ENCODE measurements at regions of chr12 and their contacts with region 1.

Region 1: GRCh38 chr12:40152783-40153383 is 47.0 kb upstream of the SLC2A13 start:
- DNase-seq: peak; percentile 78
- ATAC-seq: peak; percentile 78
- H3K4me3 ChIP-seq: no peak overlapping the region
- H3K4me3 Mint-ChIP-seq: no peak overlapping the region
- H3K27ac ChIP-seq: no peak overlapping the region
- H3K27ac Mint-ChIP-seq: no peak overlapping the region
- H3K4me1 ChIP-seq: peaks cover 23 to 26% of the 10 kb centered on the region in 2 donors
- H3K4me1 Mint-ChIP-seq: peaks cover 42% of the 10 kb centered on the region
- H3K27me3 ChIP-seq: no peaks in the 10 kb centered on the region
- H3K27me3 Mint-ChIP-seq: no peaks in the 10 kb centered on the region
- CTCF ChIP-seq: peak; percentile 96

Region 2: GRCh38 chr12:40107098-40107802 is 45.6 kb before region 1 on chr12:
- CTCF ChIA-PET with region 1: interaction called, 3 read pairs
- POLR2A ChIA-PET with region 1: no interaction called
- intact Hi-C with region 1: loop called (anchors 5 kb)
- DNase-seq: peak; percentile 90
- ATAC-seq: peak; percentile 42
- H3K4me3 ChIP-seq: peak overlapping the region in 4 of 5 experiments; percentile 39 to 83 (median 58)
- H3K4me3 Mint-ChIP-seq: peak overlapping the region; percentile 81
- H3K27ac ChIP-seq: peak overlapping the region in 1 of 2 donors; percentile 17
- H3K27ac Mint-ChIP-seq: peak overlapping the region; percentile 7
- H3K4me1 ChIP-seq: peaks cover 10 to 30% of the 10 kb centered on the region in 2 donors
- H3K4me1 Mint-ChIP-seq: peaks cover 29% of the 10 kb centered on the region
- H3K27me3 ChIP-seq: no peaks in the 10 kb centered on the region
- H3K27me3 Mint-ChIP-seq: no peaks in the 10 kb centered on the region
- CTCF ChIP-seq: peak; percentile 94

Region 3: GRCh38 chr12:40192704-40193255 is 39.9 kb after region 1 on chr12:
- CTCF ChIA-PET with region 1: interaction called, 11 read pairs
- POLR2A ChIA-PET with region 1: interaction called, 3 read pairs
- intact Hi-C with region 1: loop called (anchors 2 kb)
- DNase-seq: peak; percentile 81
- ATAC-seq: peak; percentile 92
- H3K4me3 ChIP-seq: peak overlapping the region in 3 of 5 experiments; percentile 0 to 53 (median 22)
- H3K4me3 Mint-ChIP-seq: peak overlapping the region; percentile 78
- H3K27ac ChIP-seq: peak overlapping the region; percentile 71 to 88
- H3K27ac Mint-ChIP-seq: peak overlapping the region; percentile 93
- H3K4me1 ChIP-seq: peaks cover 31 to 32% of the 10 kb centered on the region in 2 donors
- H3K4me1 Mint-ChIP-seq: peaks cover 43% of the 10 kb centered on the region
- H3K27me3 ChIP-seq: no peaks in the 10 kb centered on the region
- H3K27me3 Mint-ChIP-seq: no peaks in the 10 kb centered on the region
- CTCF ChIP-seq: no peak

Region 4: GRCh38 chr12:40208707-40209446 is 56.0 kb after region 1 on chr12:
- CTCF ChIA-PET with region 1: interaction called, 15 read pairs
- POLR2A ChIA-PET with region 1: no interaction called
- intact Hi-C with region 1: no loop called
- DNase-seq: peak; percentile 72
- ATAC-seq: peak; percentile 88
- H3K4me3 ChIP-seq: peak overlapping the region in 3 of 5 experiments; percentile 5 to 48 (median 36)
- H3K4me3 Mint-ChIP-seq: peak overlapping the region; percentile 65
- H3K27ac ChIP-seq: peak overlapping the region; percentile 64 to 84
- H3K27ac Mint-ChIP-seq: peak overlapping the region; percentile 88
- H3K4me1 ChIP-seq: peaks cover 27 to 29% of the 10 kb centered on the region in 2 donors
- H3K4me1 Mint-ChIP-seq: peaks cover 26% of the 10 kb centered on the region
- H3K27me3 ChIP-seq: no peaks in the 10 kb centered on the region
- H3K27me3 Mint-ChIP-seq: no peaks in the 10 kb centered on the region
- CTCF ChIP-seq: no peak

Region 5: GRCh38 chr12:40261937-40262336 is 109.1 kb after region 1 on chr12:
- CTCF ChIA-PET with region 1: interaction called, 8 read pairs
- POLR2A ChIA-PET with region 1: no interaction called
- intact Hi-C with region 1: loop called (anchors 1 kb)
- DNase-seq: peak; percentile 56
- ATAC-seq: peak; percentile 78
- H3K4me3 ChIP-seq: no peak overlapping the region
- H3K4me3 Mint-ChIP-seq: peak overlapping the region; percentile 44
- H3K27ac ChIP-seq: peak overlapping the region in 1 of 2 donors; percentile 32
- H3K27ac Mint-ChIP-seq: peak overlapping the region; percentile 0
- H3K4me1 ChIP-seq: peaks cover 20 to 32% of the 10 kb centered on the region in 2 donors
- H3K4me1 Mint-ChIP-seq: peaks cover 30% of the 10 kb centered on the region
- H3K27me3 ChIP-seq: no peaks in the 10 kb centered on the region
- H3K27me3 Mint-ChIP-seq: no peaks in the 10 kb centered on the region
- CTCF ChIP-seq: no peak

Region 6: DNA sequence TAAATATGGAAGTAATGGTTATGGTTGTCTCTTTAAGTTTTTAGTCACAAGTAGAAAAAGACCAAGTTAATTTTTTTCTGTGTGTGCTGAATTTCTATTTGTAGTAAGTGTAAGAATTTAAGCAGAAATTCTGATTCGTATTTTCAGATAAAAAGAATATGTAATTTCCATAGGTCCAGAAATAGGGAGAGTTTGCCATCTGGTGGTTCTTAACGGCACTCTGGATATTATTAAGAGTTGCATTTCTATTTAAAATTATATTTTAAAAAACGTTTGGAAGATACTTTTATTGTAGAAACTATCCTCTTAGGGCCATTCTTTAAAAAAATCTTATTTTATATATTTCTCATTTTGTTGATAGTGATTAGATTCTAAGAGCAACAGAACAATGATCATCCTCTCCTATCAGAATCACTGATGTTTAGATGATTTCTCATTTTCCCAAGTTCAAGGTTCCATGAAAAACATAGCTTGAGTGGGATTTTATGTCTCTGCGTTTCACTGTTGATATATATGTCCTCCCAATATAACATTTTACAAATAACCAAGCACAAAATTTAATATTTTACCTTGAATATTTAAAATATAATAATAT is 160.2 kb after region 1 on chr12:
- CTCF ChIA-PET with region 1: interaction called, 195 read pairs
- POLR2A ChIA-PET with region 1: no interaction called
- intact Hi-C with region 1: loop called (anchors 1 kb)
- DNase-seq: peak; percentile 51
- ATAC-seq: no peak
- H3K4me3 ChIP-seq: no peak overlapping the region
- H3K4me3 Mint-ChIP-seq: no peak overlapping the region
- H3K27ac ChIP-seq: peak overlapping the region in 1 of 2 donors; percentile 13
- H3K27ac Mint-ChIP-seq: no peak overlapping the region
- H3K4me1 ChIP-seq: peaks cover 13 to 15% of the 10 kb centered on the region in 2 donors
- H3K4me1 Mint-ChIP-seq: peaks cover 26% of the 10 kb centered on the region
- H3K27me3 ChIP-seq: no peaks in the 10 kb centered on the region
- H3K27me3 Mint-ChIP-seq: no peaks in the 10 kb centered on the region
- CTCF ChIP-seq: peak; percentile 78

Measured in B cell (primary cell).